MCF 10A (cell line): ENCODE measurements at regions of chr17 and their contacts with region 1.

Region 1: DNA sequence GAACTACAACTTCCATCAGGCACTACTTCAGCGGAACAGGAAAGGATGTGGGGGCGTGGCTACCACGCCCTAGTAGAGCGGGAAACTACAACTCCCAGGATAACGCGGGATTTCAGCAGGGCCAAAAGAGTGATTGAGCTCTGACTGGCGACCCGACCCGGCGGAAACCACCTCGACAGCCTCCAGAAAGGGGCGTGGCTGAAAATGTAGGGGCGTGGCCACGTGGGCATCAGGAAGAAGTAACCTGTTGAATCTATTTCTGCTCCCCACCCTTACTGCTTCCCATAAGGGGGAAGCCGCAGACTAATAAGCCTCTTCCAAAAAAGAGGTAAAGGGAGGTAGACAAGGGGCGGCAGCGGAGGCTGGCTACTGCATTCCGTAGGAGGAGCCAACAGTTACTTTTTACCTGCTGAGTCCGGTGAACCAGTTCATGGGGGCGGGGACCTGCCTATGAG is at the start of gene TMEM102:
- DNase-seq: peak; percentile 99
- H3K4me3 Mint-ChIP-seq: peak within 1 kb of the TSS; percentile 81
- H3K27ac Mint-ChIP-seq: peak within 1 kb of the TSS; percentile 92
- H3K4me1 Mint-ChIP-seq: peaks cover 12% of the 10 kb centered on the region
- H3K27me3 Mint-ChIP-seq: no peaks in the 10 kb centered on the region
- CTCF ChIP-seq: no peak
- total RNA-seq, gene TMEM102: 6.1 and 6.3 TPM in 2 replicates

Region 2: GRCh38 chr17:7045909-7046724 is 389.1 kb before region 1 on chr17:
- CTCF ChIA-PET with region 1: no interaction called
- POLR2A ChIA-PET with region 1: no interaction called
- intact Hi-C with region 1: loop called (anchors 5 kb)
- DNase-seq: peak; percentile 77
- H3K4me3 Mint-ChIP-seq: no peak overlapping the region
- H3K27ac Mint-ChIP-seq: peak overlapping the region; percentile 32
- H3K4me1 Mint-ChIP-seq: peaks cover 11% of the 10 kb centered on the region
- H3K27me3 Mint-ChIP-seq: no peaks in the 10 kb centered on the region
- CTCF ChIP-seq: peak; percentile 79

Region 3: DNA sequence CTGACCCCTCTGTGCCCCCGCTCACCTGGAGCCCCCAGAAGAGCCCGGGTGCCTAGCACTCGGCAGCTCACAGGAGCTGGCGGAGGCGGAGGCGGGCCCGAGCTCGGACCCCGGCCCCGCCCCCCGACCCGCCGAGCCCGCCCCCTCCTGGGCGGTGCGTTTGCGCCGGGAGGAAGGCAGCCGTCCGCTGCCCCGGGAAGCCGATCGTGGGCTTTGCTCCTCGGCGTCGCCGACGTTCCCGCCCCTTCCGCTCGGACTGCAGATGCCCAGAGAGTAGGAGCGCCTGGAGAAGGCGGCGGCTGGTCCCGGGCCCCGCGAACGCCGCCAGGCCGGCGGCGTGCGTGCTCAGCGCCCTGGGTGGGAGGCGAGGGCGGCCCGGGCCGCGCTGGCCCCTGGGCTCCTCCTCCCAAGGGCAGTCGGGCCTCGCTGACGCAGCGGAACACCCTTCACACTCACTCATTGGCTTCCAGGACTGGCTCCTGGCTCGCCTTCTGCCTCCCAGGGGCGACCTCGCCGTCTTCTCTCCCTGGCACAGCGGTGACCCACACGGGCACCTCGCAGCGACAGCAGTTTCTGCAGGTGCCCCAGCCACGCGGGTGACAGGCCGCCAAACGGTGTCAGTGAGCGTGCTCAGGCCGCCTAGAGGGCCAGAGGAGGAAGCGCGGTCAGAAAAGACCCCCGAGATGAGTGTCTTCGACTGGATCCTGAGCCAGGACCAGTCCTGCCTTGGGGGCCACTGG is 40.6 kb before region 1 on chr17 and contains the start of gene PLSCR3:
- CTCF ChIA-PET with region 1: interaction called, 4 read pairs
- POLR2A ChIA-PET with region 1: interaction called, 14 read pairs
- intact Hi-C with region 1: loop called (anchors 2 kb)
- DNase-seq: peak; percentile 83
- H3K4me3 Mint-ChIP-seq: peak within 1 kb of the TSS; percentile 81
- H3K27ac Mint-ChIP-seq: peak within 1 kb of the TSS; percentile 68
- H3K4me1 Mint-ChIP-seq: peaks cover 6% of the 10 kb centered on the region
- H3K27me3 Mint-ChIP-seq: no peaks in the 10 kb centered on the region
- CTCF ChIP-seq: peak; percentile 29
- total RNA-seq, gene PLSCR3: 53.8 and 59.0 TPM in 2 replicates

Region 4: GRCh38 chr17:7454980-7455379 is 19.7 kb after region 1 on chr17:
- CTCF ChIA-PET with region 1: interaction called, 30 read pairs
- POLR2A ChIA-PET with region 1: interaction called, 24 read pairs
- intact Hi-C with region 1: loop called (anchors 2 kb)
- DNase-seq: no peak
- H3K4me3 Mint-ChIP-seq: peak overlapping the region; percentile 74
- H3K27ac Mint-ChIP-seq: peak overlapping the region; percentile 14
- H3K4me1 Mint-ChIP-seq: peaks cover 13% of the 10 kb centered on the region
- H3K27me3 Mint-ChIP-seq: no peaks in the 10 kb centered on the region
- CTCF ChIP-seq: no peak

Region 5: DNA sequence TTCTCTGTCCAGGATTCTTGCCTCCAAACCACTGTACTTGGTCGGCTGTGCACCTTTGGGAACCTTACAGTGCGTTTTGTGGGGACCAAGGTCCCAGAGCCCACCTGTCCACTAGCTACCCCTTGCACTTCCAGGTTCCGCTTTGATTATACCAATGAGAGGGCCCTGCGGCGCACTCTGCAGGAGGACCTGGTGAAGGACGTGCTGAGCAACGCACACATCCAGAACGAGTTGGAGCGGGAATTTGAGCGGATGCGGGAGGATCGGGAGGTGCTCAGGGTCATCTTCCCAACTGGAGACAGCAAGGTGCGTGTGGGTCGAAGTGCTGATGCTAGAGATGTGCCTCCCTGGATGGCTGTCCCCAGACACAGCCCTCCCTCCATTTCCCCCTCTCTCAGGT is 67.7 kb after region 1 on chr17:
- CTCF ChIA-PET with region 1: interaction called, 6 read pairs
- POLR2A ChIA-PET with region 1: interaction called, 3 read pairs
- intact Hi-C with region 1: loop called (anchors 1 kb)
- DNase-seq: no peak
- H3K4me3 Mint-ChIP-seq: no peak overlapping the region
- H3K27ac Mint-ChIP-seq: no peak overlapping the region
- H3K4me1 Mint-ChIP-seq: no peaks in the 10 kb centered on the region
- H3K27me3 Mint-ChIP-seq: no peaks in the 10 kb centered on the region
- CTCF ChIP-seq: peak; percentile 23

Region 6: DNA sequence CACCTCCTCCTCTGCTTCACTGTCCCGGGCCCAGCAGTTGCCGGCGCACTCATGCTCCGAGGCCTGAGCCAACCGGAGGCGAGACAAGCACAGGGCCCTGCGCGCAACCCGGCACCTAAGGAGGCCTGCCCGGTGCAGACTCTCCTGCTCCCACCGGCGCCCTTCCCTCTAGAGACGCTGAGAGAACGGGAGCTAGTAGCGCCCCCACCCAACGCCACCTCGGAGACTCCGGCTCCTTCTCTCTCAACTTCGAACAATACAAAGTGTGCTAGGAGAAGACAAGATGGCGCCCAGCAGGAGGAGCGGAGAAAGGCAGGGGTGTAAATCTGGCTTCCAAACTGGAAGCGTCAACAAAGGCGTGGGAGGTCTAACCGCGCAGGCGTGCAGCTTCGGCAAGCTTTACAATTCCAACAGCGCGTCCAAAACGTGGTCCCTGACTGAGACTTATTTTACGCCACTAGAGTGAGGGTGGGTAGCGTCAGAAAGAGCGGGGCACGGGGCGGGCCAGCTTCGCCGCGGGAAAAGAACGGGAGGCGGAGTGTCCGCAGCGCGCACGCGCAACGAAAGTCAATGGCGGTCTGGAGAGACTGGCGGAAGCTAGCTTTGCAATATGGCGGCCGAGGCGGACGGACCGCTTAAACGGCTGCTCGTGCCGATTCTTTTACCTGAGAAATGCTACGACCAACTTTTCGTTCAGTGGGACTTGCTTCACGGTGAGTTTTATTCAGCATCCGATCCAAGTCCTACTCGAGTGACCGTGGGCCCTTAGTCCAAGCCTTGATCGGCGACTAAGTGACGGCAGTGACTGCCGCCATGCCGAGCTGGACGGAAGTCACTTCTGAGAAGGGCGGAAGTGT is 148.2 kb after region 1 on chr17 and contains the start of gene MPDU1:
- CTCF ChIA-PET with region 1: interaction called, 4 read pairs
- POLR2A ChIA-PET with region 1: interaction called, 20 read pairs
- intact Hi-C with region 1: no loop called
- DNase-seq: peak; percentile 98
- H3K4me3 Mint-ChIP-seq: peak within 1 kb of the TSS; percentile 93
- H3K27ac Mint-ChIP-seq: peak within 1 kb of the TSS; percentile 100
- H3K4me1 Mint-ChIP-seq: peaks cover 56% of the 10 kb centered on the region
- H3K27me3 Mint-ChIP-seq: no peaks in the 10 kb centered on the region
- CTCF ChIP-seq: no peak
- total RNA-seq, gene MPDU1: 52.0 and 56.5 TPM in 2 replicates

Region 7: DNA sequence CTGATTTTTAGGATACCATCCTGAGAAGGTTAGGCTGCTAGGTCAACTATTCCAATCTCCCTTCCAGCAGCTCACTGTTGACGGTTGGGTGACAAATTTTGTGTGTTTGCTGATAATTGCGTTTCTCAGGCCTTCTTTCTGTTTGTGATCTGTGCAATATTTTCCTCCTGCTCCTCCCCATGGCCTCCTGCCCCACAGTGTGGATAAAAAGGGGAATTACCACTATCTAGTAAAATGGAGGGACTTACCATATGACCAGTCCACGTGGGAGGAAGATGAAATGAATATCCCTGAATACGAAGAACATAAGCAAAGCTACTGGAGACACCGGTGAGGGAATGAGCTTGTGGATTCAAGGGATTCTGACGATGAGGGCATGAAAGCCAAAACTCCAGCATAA is 462.5 kb after region 1 on chr17:
- CTCF ChIA-PET with region 1: no interaction called
- POLR2A ChIA-PET with region 1: no interaction called
- intact Hi-C with region 1: no loop called
- DNase-seq: peak; percentile 51
- H3K4me3 Mint-ChIP-seq: no peak overlapping the region
- H3K27ac Mint-ChIP-seq: no peak overlapping the region
- H3K4me1 Mint-ChIP-seq: peaks cover 4% of the 10 kb centered on the region
- H3K27me3 Mint-ChIP-seq: no peaks in the 10 kb centered on the region
- CTCF ChIP-seq: peak; percentile 51